Naive thymus-derived CD8-positive, alpha-beta T cell (primary cell): ENCODE measurements at regions of chr19 and their contacts with region 1.

Region 1: GRCh38 chr19:17125715-17126677 is 50.4 kb downstream of the MYO9B start:
- DNase-seq: peak; percentile 55 to 92 (median 79)
- ATAC-seq: peak; percentile 86 to 87
- H3K4me3 Mint-ChIP-seq: peak overlapping the region; percentile 80 to 100 (median 90)
- H3K27ac Mint-ChIP-seq: peak overlapping the region; percentile 98 to 100 (median 99)
- H3K4me1 Mint-ChIP-seq: peaks cover 17 to 79% (median 67%) of the 10 kb centered on the region in 4 donors
- H3K27me3 Mint-ChIP-seq: no peaks in the 10 kb centered on the region

Region 2: GRCh38 chr19:17075035-17075863 is 50.7 kb before region 1 on chr19 and contains the starts of genes HAUS8 and MYO9B:
- POLR2A ChIA-PET with region 1: interaction called, 76 read pairs
- DNase-seq: peak; percentile 98 to 100 (median 99)
- ATAC-seq: peak; percentile 89 to 96
- H3K4me3 Mint-ChIP-seq: peak within 1 kb of the TSS; percentile 91 to 99 (median 98)
- H3K27ac Mint-ChIP-seq: peak within 1 kb of the TSS; percentile 92 to 99 (median 97)
- H3K4me1 Mint-ChIP-seq: peaks cover 29 to 74% (median 66%) of the 10 kb centered on the region in 4 donors
- H3K27me3 Mint-ChIP-seq: no peaks in the 10 kb centered on the region
- polyA plus RNA-seq, gene HAUS8: 5.3 to 11.9 (median 5.9) TPM
- polyA plus RNA-seq, gene MYO9B: 3.3 to 22.3 (median 8.0) TPM

Region 3: DNA sequence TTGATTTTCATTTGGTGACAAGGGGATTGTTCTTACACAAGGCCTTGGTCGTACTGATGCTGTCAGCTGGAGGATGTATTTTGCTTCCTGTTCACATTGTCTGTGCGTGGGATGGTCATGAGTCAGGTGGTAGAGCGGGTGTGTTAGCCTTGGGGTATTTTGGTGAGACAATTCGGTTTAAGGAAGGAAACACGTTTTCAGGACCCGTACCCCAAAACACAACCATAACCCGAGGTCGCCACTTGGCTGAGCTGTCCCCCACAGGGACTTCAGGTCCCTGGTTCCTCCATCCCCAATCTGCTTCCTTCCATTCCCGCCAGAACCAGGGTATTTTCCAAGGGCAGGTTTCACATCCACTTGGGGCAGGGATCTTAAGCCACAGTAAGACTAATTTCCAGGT is 35.4 kb before region 1 on chr19:
- POLR2A ChIA-PET with region 1: interaction called, 10 read pairs
- DNase-seq: peak in 3 of 10 donors; percentile 14 to 26 (median 15)
- ATAC-seq: peak; percentile 57 to 78
- H3K4me3 Mint-ChIP-seq: peak overlapping the region in 7 of 10 donors; percentile 3 to 63 (median 30)
- H3K27ac Mint-ChIP-seq: peak overlapping the region; percentile 24 to 81 (median 70)
- H3K4me1 Mint-ChIP-seq: peaks cover 28 to 86% (median 66%) of the 10 kb centered on the region in 4 donors
- H3K27me3 Mint-ChIP-seq: no peaks in the 10 kb centered on the region

Region 4: GRCh38 chr19:17109962-17110601 is 15.9 kb before region 1 on chr19:
- POLR2A ChIA-PET with region 1: interaction called, 25 read pairs
- DNase-seq: peak in 5 of 10 donors; percentile 9 to 52 (median 25)
- ATAC-seq: peak; percentile 60 to 72
- H3K4me3 Mint-ChIP-seq: peak overlapping the region; percentile 11 to 74 (median 66)
- H3K27ac Mint-ChIP-seq: peak overlapping the region; percentile 68 to 92 (median 88)
- H3K4me1 Mint-ChIP-seq: peaks cover 36 to 83% (median 61%) of the 10 kb centered on the region in 4 donors
- H3K27me3 Mint-ChIP-seq: no peaks in the 10 kb centered on the region

Region 5: DNA sequence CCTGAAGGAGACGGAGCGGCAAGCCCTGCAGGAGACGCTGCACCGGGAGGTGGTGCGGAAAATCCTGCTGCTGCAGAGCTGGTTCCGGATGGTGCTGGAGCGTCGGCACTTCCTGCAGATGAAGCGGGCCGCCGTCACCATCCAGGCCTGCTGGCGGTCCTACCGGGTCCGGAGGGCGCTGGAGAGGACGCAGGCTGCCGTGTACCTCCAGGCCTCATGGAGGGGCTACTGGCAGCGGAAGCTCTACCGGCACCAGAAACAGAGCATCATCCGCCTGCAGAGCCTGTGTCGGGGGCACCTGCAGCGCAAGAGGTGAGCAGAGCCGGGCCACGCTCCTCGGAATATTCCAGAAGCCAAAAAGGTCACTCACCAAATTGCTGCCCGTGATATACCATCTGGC is 66.8 kb after region 1 on chr19:
- POLR2A ChIA-PET with region 1: no interaction called
- DNase-seq: no peak
- ATAC-seq: no peak
- H3K4me3 Mint-ChIP-seq: no peak overlapping the region
- H3K27ac Mint-ChIP-seq: no peak overlapping the region
- H3K4me1 Mint-ChIP-seq: peaks cover 0 to 5% (median 1%) of the 10 kb centered on the region in 4 donors
- H3K27me3 Mint-ChIP-seq: no peaks in the 10 kb centered on the region

Region 6: GRCh38 chr19:17215125-17215971 is 89.4 kb after region 1 on chr19 and contains the start of gene USE1:
- POLR2A ChIA-PET with region 1: interaction called, 18 read pairs
- DNase-seq: peak; percentile 76 to 95 (median 86)
- ATAC-seq: peak; percentile 96 to 99
- H3K4me3 Mint-ChIP-seq: peak within 1 kb of the TSS; percentile 83 to 95 (median 90)
- H3K27ac Mint-ChIP-seq: peak within 1 kb of the TSS; percentile 94 to 100 (median 99)
- H3K4me1 Mint-ChIP-seq: peaks cover 2 to 21% (median 15%) of the 10 kb centered on the region in 4 donors
- H3K27me3 Mint-ChIP-seq: no peaks in the 10 kb centered on the region
- polyA plus RNA-seq, gene USE1: 50.4 to 69.0 (median 57.0) TPM

Region 7: GRCh38 chr19:17226002-17226933 is 100.3 kb after region 1 on chr19 and contains the start of gene OCEL1:
- POLR2A ChIA-PET with region 1: interaction called, 16 read pairs
- DNase-seq: peak; percentile 92 to 99 (median 94)
- ATAC-seq: peak; percentile 90 to 92
- H3K4me3 Mint-ChIP-seq: peak within 1 kb of the TSS; percentile 88 to 99 (median 94)
- H3K27ac Mint-ChIP-seq: peak within 1 kb of the TSS; percentile 66 to 99 (median 96)
- H3K4me1 Mint-ChIP-seq: peaks cover 7 to 17% (median 11%) of the 10 kb centered on the region in 4 donors
- H3K27me3 Mint-ChIP-seq: no peaks in the 10 kb centered on the region
- polyA plus RNA-seq, gene OCEL1: 21.9 to 52.4 (median 40.1) TPM

Region 8: DNA sequence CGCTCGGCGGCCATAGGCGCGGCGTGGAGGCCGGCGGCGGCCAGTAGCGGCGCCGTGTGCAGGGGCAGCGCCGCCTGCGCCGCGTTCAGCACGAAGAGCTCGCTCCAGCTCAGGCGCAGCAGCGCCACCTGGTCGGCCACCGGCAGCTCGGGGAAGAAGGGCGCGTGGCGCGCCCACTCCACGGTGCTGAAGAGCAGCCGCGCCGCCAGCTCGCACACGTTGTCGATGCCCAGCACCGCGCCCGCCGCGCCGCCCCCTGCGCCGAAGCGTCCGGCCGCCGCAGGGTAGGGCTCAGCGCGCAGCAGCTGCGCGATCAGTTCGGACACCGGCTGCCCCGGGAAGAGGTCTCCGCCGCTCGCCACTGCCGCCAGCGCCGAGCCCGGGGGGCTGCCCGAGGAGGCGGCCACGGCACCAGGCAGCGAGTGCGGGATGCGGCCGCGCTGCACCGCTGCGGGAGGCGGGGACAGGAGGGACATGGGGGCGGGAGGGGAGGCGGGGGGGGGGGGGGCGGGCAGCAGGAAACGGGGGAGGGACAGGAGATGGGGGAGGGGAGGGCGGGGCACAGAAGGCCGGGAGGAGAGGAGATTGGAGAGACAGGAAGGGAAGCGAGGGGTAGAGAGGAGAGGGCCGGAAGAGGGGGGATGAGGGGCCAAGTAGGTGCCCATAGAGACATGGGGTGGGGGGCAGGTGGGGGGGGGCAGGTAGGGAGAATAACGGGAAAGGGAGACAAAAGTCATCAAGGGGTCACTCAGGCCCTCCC is 109.8 kb after region 1 on chr19:
- POLR2A ChIA-PET with region 1: interaction called, 11 read pairs
- DNase-seq: peak; percentile 58 to 85 (median 72)
- ATAC-seq: peak; percentile 94 to 97
- H3K4me3 Mint-ChIP-seq: peak overlapping the region; percentile 29 to 88 (median 80)
- H3K27ac Mint-ChIP-seq: peak overlapping the region in 1 of 10 donors; percentile 36
- H3K4me1 Mint-ChIP-seq: peaks cover 9 to 15% (median 14%) of the 10 kb centered on the region in 4 donors
- H3K27me3 Mint-ChIP-seq: no peaks in the 10 kb centered on the region